Prostate gland (tissue), 2 donors: ENCODE measurements at regions of chr19 and their contacts with region 1.

Region 1: GRCh38 chr19:53333463-53334449 is at the start of gene ZNF845:
- DNase-seq: peak; percentile 96
- H3K4me3 ChIP-seq: peak within 1 kb of the TSS; percentile 55 to 61
- H3K27ac ChIP-seq: peak within 1 kb of the TSS; percentile 58 to 73
- H3K4me1 ChIP-seq: no peaks in the 10 kb centered on the region
- H3K27me3 ChIP-seq: no peaks in the 10 kb centered on the region
- CTCF ChIP-seq: no peak
- POLR2A ChIP-seq: peak; percentile 61
- total RNA-seq, gene ZNF845: 6.5 to 7.8 TPM

Region 2: GRCh38 chr19:53254411-53255341 is 79.1 kb before region 1 on chr19 and contains the start of gene ZNF677:
- intact Hi-C with region 1: loop called (anchors 5 kb)
- DNase-seq: peak; percentile 85
- H3K4me3 ChIP-seq: peak within 1 kb of the TSS; percentile 65 to 76
- H3K27ac ChIP-seq: peak within 1 kb of the TSS; percentile 81
- H3K4me1 ChIP-seq: no peaks in the 10 kb centered on the region
- H3K27me3 ChIP-seq: no peaks in the 10 kb centered on the region
- CTCF ChIP-seq: no peak
- POLR2A ChIP-seq: peak; percentile 22
- total RNA-seq, gene ZNF677: 28.1 to 35.8 TPM

Region 3: DNA sequence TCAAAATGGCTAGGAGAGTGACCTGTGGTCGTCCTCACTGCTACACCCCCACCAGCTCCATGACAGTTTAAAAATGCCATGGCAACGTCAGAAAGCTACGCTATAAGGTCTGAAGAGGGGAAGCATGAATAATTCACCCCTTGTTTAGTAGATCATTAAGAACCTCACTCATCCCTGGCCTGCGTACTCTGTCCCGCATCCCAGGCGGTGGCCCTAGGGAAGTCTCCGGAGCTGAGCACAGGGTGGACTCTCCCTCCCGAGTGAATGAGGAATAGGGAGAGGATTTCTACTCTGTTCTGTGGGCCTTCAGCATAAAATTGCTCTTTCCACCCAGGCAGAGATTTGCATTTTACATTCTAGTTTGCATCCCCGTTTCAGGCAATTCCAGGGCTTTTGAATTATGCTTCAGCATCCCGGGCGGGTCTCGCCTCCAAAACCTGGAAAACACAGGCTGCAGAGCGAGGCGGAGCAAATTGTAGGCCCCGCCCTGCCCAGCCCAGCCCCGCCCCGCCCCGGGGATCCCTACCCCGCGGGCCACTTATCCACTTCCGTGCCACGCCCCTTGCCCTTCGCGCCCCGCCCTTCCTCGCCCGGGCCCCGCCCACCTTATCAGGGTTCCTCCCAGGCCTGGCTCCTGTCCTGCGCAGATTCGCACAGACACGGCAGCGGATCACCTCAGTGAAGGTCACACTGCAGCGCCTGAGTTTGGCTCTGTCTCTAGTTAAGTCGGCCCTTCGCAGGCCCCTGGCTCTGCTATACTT is 24.2 kb after region 1 on chr19:
- intact Hi-C with region 1: no loop called
- DNase-seq: no peak
- H3K4me3 ChIP-seq: no peak overlapping the region
- H3K27ac ChIP-seq: no peak overlapping the region
- H3K4me1 ChIP-seq: no peaks in the 10 kb centered on the region
- H3K27me3 ChIP-seq: no peaks in the 10 kb centered on the region
- CTCF ChIP-seq: no peak
- POLR2A ChIP-seq: no peak